HepG2 (cell line): ENCODE measurements at regions of chr11 and their contacts with region 1.

Region 1: DNA sequence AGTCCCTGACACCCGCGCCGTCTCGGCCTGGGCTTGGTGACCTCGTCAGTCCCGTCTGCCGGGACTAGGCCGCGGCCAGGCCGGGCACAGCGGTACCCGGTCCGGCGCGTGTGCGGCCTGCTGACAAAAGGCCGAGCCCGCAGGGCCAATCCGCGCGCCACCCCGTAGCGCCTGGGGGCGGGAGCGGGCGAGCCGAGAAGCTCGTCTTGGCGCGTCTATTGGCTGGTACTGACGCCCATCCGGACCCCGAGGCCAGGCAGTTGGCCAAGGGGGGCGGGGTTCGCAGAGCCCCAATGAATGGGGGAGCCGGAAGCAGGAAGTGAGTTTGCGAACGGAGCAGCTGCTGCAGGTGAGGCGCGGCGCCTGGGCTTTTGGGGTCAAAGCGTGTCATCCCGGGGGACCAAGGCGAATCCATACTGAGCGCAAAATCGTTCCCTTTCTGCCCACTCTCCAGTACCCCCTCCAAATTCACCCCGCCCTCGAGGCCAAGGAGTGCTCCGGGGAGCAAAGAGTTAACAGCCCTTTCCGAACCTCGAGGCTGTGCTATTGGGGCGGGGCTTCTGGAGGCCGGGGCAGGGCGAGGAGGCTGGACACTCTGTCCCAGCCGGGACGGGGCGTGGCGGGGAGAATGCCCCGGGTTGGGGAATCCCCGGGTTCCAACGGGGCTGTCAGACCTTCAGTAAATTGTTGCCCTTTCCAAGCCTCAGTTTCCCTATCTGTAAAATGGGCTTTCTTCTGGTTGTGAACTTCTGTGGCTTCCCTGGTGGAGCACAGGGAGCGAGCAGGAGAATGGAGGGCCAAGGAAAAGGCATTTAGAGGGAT is at the start of gene DPP3:
- DNase-seq: peak; percentile 93
- ATAC-seq: peak; percentile 93
- H3K4me3 ChIP-seq: peak within 1 kb of the TSS; percentile 70 to 93 (median 92)
- H3K27ac ChIP-seq: peak within 1 kb of the TSS; percentile 87
- H3K4me1 ChIP-seq: peaks cover 50% of the 10 kb centered on the region
- H3K27me3 ChIP-seq: no peaks in the 10 kb centered on the region
- CTCF ChIP-seq: peak; percentile 18; the same call in 1 of the 2 replicates
- EP300 ChIP-seq: no peak
- POLR2A ChIP-seq: peak; percentile 85 to 93
- RAD21 ChIP-seq: no peak; the same call in 1 of the 2 replicates
- total RNA-seq, gene DPP3: 48.7 and 59.8 TPM in 2 replicates

Region 2: GRCh38 chr11:66438504-66439466 is 41.5 kb before region 1 on chr11 and contains the start of gene MRPL11:
- CTCF ChIA-PET with region 1: no interaction called
- POLR2A ChIA-PET with region 1: interaction called, 27 read pairs
- in situ Hi-C with region 1: no loop called
- intact Hi-C with region 1: no loop called
- DNase-seq: peak; percentile 92
- ATAC-seq: peak; percentile 94
- H3K4me3 ChIP-seq: peak within 1 kb of the TSS; percentile 78 to 89 (median 84)
- H3K27ac ChIP-seq: peak within 1 kb of the TSS; percentile 88
- H3K4me1 ChIP-seq: peaks cover 33% of the 10 kb centered on the region
- H3K27me3 ChIP-seq: peaks cover 2 to 9% of the 10 kb centered on the region in 2 experiments; a peak in 2 of 5 replicates
- CTCF ChIP-seq: peak; percentile 90
- EP300 ChIP-seq: no peak
- POLR2A ChIP-seq: peak; percentile 67 to 78; a peak in 3 of 4 replicates
- RAD21 ChIP-seq: no peak
- total RNA-seq, gene MRPL11: 176 and 220 TPM in 2 replicates

Region 3: GRCh38 chr11:66466225-66467027 is 13.9 kb before region 1 on chr11 and contains the start of gene PELI3:
- CTCF ChIA-PET with region 1: no interaction called
- POLR2A ChIA-PET with region 1: interaction called, 48 read pairs
- in situ Hi-C with region 1: no loop called
- intact Hi-C with region 1: no loop called
- DNase-seq: peak; percentile 72
- ATAC-seq: peak; percentile 86
- H3K4me3 ChIP-seq: peak within 1 kb of the TSS; percentile 77 to 87 (median 84)
- H3K27ac ChIP-seq: no peak within 1 kb of the TSS
- H3K4me1 ChIP-seq: peaks cover 26% of the 10 kb centered on the region
- H3K27me3 ChIP-seq: peaks cover 0 to 12% of the 10 kb centered on the region in 2 experiments; a peak in 3 of 5 replicates
- CTCF ChIP-seq: no peak
- EP300 ChIP-seq: no peak
- POLR2A ChIP-seq: peak in 1 of 2 experiments; percentile 56; a peak in 2 of 4 replicates
- RAD21 ChIP-seq: no peak
- total RNA-seq, gene PELI3: 2.5 and 4.0 TPM in 2 replicates

Region 4: GRCh38 chr11:66491315-66491935 is 11.1 kb after region 1 on chr11:
- CTCF ChIA-PET with region 1: no interaction called
- POLR2A ChIA-PET with region 1: interaction called, 11 read pairs
- in situ Hi-C with region 1: no loop called
- intact Hi-C with region 1: no loop called
- DNase-seq: no peak
- ATAC-seq: peak; percentile 80
- H3K4me3 ChIP-seq: no peak overlapping the region
- H3K27ac ChIP-seq: no peak overlapping the region
- H3K4me1 ChIP-seq: peaks cover 8% of the 10 kb centered on the region; the same call in 1 of the 2 replicates
- H3K27me3 ChIP-seq: no peaks in the 10 kb centered on the region
- CTCF ChIP-seq: 0 out of 2 replicates have a peak, but pooled peaks have one; percentile 10
- EP300 ChIP-seq: no peak
- POLR2A ChIP-seq: no peak
- RAD21 ChIP-seq: no peak

Region 5: GRCh38 chr11:66510271-66510989 is 30.1 kb after region 1 on chr11 and contains the start of gene BBS1:
- CTCF ChIA-PET with region 1: no interaction called
- POLR2A ChIA-PET with region 1: interaction called, 34 read pairs
- in situ Hi-C with region 1: no loop called
- intact Hi-C with region 1: no loop called
- DNase-seq: peak; percentile 63
- ATAC-seq: peak; percentile 96
- H3K4me3 ChIP-seq: peak within 1 kb of the TSS; percentile 68 to 95 (median 70)
- H3K27ac ChIP-seq: peak within 1 kb of the TSS; percentile 76
- H3K4me1 ChIP-seq: peaks cover 33% of the 10 kb centered on the region
- H3K27me3 ChIP-seq: no peaks in the 10 kb centered on the region; a peak in 1 of 5 replicates
- CTCF ChIP-seq: 0 out of 2 replicates have a peak, but pooled peaks have one; percentile 9
- EP300 ChIP-seq: no peak; a peak in 1 of 4 replicates
- POLR2A ChIP-seq: peak; percentile 63 to 71
- RAD21 ChIP-seq: peak; percentile 40; the same call in 1 of the 2 replicates
- total RNA-seq, gene BBS1: 8.1 and 14.1 TPM in 2 replicates

Region 6: GRCh38 chr11:66545701-66546367 is 65.5 kb after region 1 on chr11 and contains the start of gene ZDHHC24:
- CTCF ChIA-PET with region 1: no interaction called
- POLR2A ChIA-PET with region 1: interaction called, 13 read pairs
- in situ Hi-C with region 1: no loop called
- intact Hi-C with region 1: loop called (anchors 1 kb)
- DNase-seq: peak; percentile 92
- ATAC-seq: peak; percentile 92
- H3K4me3 ChIP-seq: peak within 1 kb of the TSS; percentile 69 to 93 (median 83)
- H3K27ac ChIP-seq: peak within 1 kb of the TSS; percentile 53
- H3K4me1 ChIP-seq: peaks cover 39% of the 10 kb centered on the region
- H3K27me3 ChIP-seq: peaks cover 0 to 7% of the 10 kb centered on the region in 2 experiments; a peak in 4 of 5 replicates
- CTCF ChIP-seq: 0 out of 2 replicates have a peak, but pooled peaks have one; percentile 28
- EP300 ChIP-seq: no peak
- POLR2A ChIP-seq: peak; percentile 70 to 73
- RAD21 ChIP-seq: peak; percentile 32; the same call in 1 of the 2 replicates
- total RNA-seq, gene ZDHHC24: 1.9 and 4.3 TPM in 2 replicates

Region 7: GRCh38 chr11:66600631-66601233 is 120.4 kb after region 1 on chr11:
- CTCF ChIA-PET with region 1: no interaction called
- POLR2A ChIA-PET with region 1: no interaction called
- in situ Hi-C with region 1: no loop called
- intact Hi-C with region 1: no loop called
- DNase-seq: no peak
- ATAC-seq: no peak
- H3K4me3 ChIP-seq: no peak overlapping the region
- H3K27ac ChIP-seq: no peak overlapping the region
- H3K4me1 ChIP-seq: peaks cover 13% of the 10 kb centered on the region
- H3K27me3 ChIP-seq: no peaks in the 10 kb centered on the region
- CTCF ChIP-seq: no peak
- EP300 ChIP-seq: no peak
- POLR2A ChIP-seq: no peak
- RAD21 ChIP-seq: no peak